Activated T-helper 1 cell treated with anti-CD3 and anti-CD28 coated beads, Interleukin-12 subunit alpha, Interleukin-12 subunit beta, Interleukin-2, Interleukin-4 antibody, amounts not matched to agents 30 ng/mL and 10 ng/mL and 1 ng/mL, durations not matched to agents 14 hours and 24 hours and 36 hours (primary cell): ENCODE measurements at regions of chr3 and their contacts with region 1.

Region 1: GRCh38 chr3:119559441-119559963 is at the start of gene CD80:
- DNase-seq: peak; percentile 67
- H3K4me3 Mint-ChIP-seq: peak within 1 kb of the TSS; percentile 79
- H3K27ac Mint-ChIP-seq: peak within 1 kb of the TSS; percentile 88
- H3K4me1 Mint-ChIP-seq: peaks cover 73% of the 10 kb centered on the region
- H3K27me3 Mint-ChIP-seq: peaks cover 4% of the 10 kb centered on the region
- total RNA-seq, gene CD80: 18.1 and 19.5 TPM in 2 replicates

Region 2: DNA sequence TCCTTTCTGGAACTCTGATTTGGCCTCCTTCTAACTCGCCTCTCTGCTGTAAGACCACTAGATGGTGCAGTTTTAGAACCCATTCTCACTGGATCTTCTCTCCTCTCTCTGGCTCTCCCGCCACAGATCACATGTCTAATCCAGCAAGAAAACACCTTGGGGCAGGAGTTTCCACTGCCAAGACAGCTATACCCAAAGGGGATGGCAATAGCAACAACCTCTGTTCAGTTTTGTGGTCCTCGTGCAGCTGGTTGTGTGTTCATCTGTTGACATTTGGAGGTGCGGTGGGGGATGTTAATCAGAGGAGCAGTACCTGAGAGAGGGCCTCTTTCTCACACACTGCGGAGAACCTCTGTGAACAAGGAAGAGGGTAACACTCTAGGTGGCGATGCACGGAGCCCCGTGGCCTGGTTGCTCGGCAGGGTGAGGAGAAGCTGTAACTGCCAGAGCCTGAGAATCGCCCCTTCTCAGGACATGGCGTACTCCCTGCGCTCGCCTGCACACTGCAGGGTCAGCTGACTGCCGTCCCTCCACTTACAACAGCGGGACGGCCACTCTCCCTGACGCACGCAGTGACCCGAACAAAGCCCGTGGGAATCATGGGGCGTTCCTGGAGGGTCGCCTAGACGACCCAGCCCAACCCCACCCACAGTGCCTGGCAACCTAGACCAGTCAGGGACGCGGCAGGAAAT is 413.9 kb before region 1 on chr3 and contains the start of gene TEX55:
- intact Hi-C with region 1: loop called (anchors 5 kb)
- DNase-seq: no peak
- H3K4me3 Mint-ChIP-seq: no peak within 1 kb of the TSS
- H3K27ac Mint-ChIP-seq: no peak within 1 kb of the TSS
- H3K4me1 Mint-ChIP-seq: no peaks in the 10 kb centered on the region
- H3K27me3 Mint-ChIP-seq: no peaks in the 10 kb centered on the region
- total RNA-seq, gene TEX55: not detected in 2 replicates

Region 3: DNA sequence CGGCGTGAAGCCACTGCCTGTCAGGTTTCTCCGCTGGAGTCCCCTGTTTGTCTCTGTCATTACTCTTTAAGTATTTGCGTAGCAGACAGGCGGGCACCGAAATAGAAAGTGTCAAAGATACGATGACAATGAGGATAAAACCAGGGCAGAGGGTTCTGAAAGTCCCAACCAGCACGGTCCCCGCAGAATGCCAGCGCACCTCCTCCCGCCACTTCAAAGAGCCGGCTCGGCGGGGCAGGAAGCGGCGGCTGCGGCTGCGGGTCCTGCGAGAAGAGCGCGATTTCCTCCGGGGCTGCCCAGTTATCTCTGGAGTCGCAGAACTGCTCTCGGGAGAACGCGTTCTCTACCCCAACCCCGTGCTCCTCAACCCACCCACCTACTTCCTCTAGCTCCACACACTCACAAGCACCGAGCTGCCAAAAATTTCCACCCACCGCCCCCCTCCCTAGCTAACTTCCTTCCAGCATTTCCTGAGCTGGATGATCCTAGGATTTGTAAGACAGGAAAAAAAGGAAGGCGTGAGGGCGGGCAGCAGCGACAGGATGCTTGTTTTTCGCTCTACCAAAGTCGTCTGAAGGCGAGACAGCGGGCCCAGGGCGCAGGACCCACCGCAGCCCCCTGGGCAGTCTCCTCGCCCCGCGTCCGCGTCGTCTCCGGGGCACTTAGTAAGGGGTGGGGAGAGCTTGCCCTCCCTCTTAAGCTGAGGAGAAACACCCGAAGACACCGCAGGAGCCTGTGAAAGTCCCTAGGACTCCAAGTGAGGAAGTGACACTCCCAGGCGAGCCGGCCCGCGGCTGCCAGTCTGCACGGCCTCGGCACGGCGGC is 265.4 kb before region 1 on chr3 and contains the start of gene ARHGAP31:
- intact Hi-C with region 1: loop called (anchors 5 kb)
- DNase-seq: peak; percentile 82
- H3K4me3 Mint-ChIP-seq: peak within 1 kb of the TSS; percentile 85
- H3K27ac Mint-ChIP-seq: peak within 1 kb of the TSS; percentile 78
- H3K4me1 Mint-ChIP-seq: peaks cover 55% of the 10 kb centered on the region
- H3K27me3 Mint-ChIP-seq: peaks cover 42% of the 10 kb centered on the region
- total RNA-seq, gene ARHGAP31: 7.5 and 8.0 TPM in 2 replicates

Region 4: GRCh38 chr3:119498186-119498987 is 61.1 kb before region 1 on chr3 and contains the start of gene TIMMDC1:
- intact Hi-C with region 1: loop called (anchors 1 kb)
- DNase-seq: peak; percentile 96
- H3K4me3 Mint-ChIP-seq: peak within 1 kb of the TSS; percentile 100
- H3K27ac Mint-ChIP-seq: peak within 1 kb of the TSS; percentile 99
- H3K4me1 Mint-ChIP-seq: peaks cover 33% of the 10 kb centered on the region
- H3K27me3 Mint-ChIP-seq: no peaks in the 10 kb centered on the region
- total RNA-seq, gene TIMMDC1: 124 and 126 TPM in 2 replicates

Region 5: GRCh38 chr3:119524931-119525662 is 34.4 kb before region 1 on chr3:
- intact Hi-C with region 1: loop called (anchors 2 kb)
- DNase-seq: no peak
- H3K4me3 Mint-ChIP-seq: no peak overlapping the region
- H3K27ac Mint-ChIP-seq: no peak overlapping the region
- H3K4me1 Mint-ChIP-seq: peaks cover 16% of the 10 kb centered on the region
- H3K27me3 Mint-ChIP-seq: no peaks in the 10 kb centered on the region

Region 6: GRCh38 chr3:119637679-119638525 is 78.4 kb after region 1 on chr3:
- intact Hi-C with region 1: loop called (anchors 1 kb)
- DNase-seq: no peak
- H3K4me3 Mint-ChIP-seq: peak overlapping the region; percentile 47
- H3K27ac Mint-ChIP-seq: peak overlapping the region; percentile 89
- H3K4me1 Mint-ChIP-seq: peaks cover 45% of the 10 kb centered on the region
- H3K27me3 Mint-ChIP-seq: peaks cover under 1% of the 10 kb centered on the region